Pancreas (tissue), 10 donors: ENCODE measurements at regions of chr12 and their contacts with region 1.

Region 1: DNA sequence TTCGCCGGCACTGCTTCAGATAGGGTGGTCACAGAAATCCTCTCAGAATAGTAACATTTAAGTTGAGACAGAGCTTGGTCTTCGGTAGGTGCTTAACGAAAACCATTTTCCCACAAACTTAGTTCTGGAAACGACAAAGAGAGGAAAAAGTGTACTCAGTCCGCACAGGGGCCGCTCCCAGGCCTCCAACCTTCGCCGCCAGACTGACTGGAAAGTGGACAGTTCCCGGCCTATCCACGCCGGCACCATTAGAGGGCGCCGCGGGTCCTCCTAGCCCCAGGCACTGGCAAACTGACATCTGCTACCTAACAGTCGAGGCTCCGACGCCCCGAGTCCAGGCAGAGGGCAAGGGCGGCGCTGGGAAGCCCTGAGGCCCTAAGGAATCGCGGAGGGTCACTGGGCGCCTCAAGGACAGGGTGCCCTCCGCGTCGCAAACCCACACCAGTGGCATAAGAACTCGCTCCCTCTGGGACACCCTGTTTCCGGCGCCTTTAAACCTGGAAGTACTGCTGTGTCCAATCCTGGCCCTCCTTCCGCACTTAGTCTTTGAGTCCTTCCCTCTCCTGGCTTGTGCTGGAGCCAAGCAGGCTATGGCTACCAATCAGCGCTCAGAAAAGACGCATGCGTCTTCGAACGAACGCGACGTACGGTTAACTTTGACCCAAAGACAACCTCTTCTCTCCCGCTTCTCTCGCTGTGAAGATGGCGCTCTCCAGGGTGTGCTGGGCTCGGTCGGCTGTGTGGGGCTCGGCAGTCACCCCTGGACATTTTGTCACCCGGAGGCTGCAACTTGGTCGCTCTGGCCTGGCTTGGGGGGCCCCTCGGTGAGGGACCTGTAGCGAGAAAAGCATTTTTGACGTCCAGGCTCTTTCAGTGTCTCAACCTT is at the start of gene LETMD1:
- DNase-seq: peak; percentile 90 to 95 (median 94)
- ATAC-seq: peak; percentile 97 to 99 (median 98)
- H3K4me3 ChIP-seq: peak within 1 kb of the TSS; percentile 79 to 91 (median 80)
- H3K27ac ChIP-seq: peak within 1 kb of the TSS; percentile 88 to 95 (median 94)
- H3K4me1 ChIP-seq: peaks cover 8 to 15% (median 12%) of the 10 kb centered on the region in 3 donors
- H3K27me3 ChIP-seq: no peaks in the 10 kb centered on the region
- CTCF ChIP-seq: peak; percentile 70 to 82 (median 79)
- total RNA-seq, gene LETMD1: 34.3 to 59.1 (median 49.8) TPM

Region 2: GRCh38 chr12:51341259-51342007 is 293.5 kb after region 1 on chr12:
- intact Hi-C with region 1: loop called in 1 of 3 experiments (anchors 10 kb)
- DNase-seq: peak in 5 of 6 donors; percentile 53 to 77 (median 62)
- ATAC-seq: peak; percentile 90 to 99 (median 97)
- H3K4me3 ChIP-seq: peak overlapping the region in 1 of 4 donors; percentile 25
- H3K27ac ChIP-seq: no peak overlapping the region
- H3K4me1 ChIP-seq: peaks cover 0 to 3% (median 0%) of the 10 kb centered on the region in 3 donors
- H3K27me3 ChIP-seq: no peaks in the 10 kb centered on the region
- CTCF ChIP-seq: peak; percentile 75 to 91 (median 87)